K562 (cell line): ENCODE measurements at regions of chr5 and their contacts with region 1.

Region 1: GRCh38 chr5:175489693-175490443 is 11.5 kb downstream of the SFXN1 start:
- DNase-seq: no peak
- ATAC-seq: peak; percentile 26; the same call in 1 of the 3 replicates
- H3K4me3 ChIP-seq: no peak overlapping the region
- H3K27ac ChIP-seq: no peak overlapping the region
- H3K4me1 ChIP-seq: peaks cover 0 to 4% of the 10 kb centered on the region in 2 experiments; a peak in 2 of 5 replicates
- H3K27me3 ChIP-seq: no peaks in the 10 kb centered on the region
- CTCF ChIP-seq: no peak
- EP300 ChIP-seq: no peak
- POLR2A ChIP-seq: no peak
- RAD21 ChIP-seq: no peak

Region 2: DNA sequence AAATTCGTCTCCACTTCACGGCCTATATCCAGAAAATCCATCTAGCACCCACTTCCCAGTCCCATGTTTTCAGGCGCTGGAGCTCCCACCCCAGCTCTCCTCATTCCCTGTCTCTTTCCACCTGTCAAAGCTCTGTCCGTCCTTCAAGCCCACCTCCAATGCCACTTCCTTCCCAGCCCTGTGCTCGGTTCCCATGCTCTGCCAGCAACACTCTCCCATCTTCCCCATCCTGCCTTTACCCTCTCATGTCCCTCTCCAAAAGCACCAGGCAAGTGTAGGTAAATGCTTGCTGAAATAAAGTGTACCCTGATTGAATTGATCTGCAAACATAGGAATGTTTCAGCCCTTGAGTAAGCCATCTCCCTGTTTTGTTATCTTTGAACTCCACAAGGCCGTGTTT is 55.1 kb before region 1 on chr5:
- CTCF ChIA-PET with region 1: no interaction called
- POLR2A ChIA-PET with region 1: no interaction called
- in situ Hi-C with region 1: no loop called
- intact Hi-C with region 1: no loop called
- DNase-seq: no peak
- ATAC-seq: no peak
- H3K4me3 ChIP-seq: no peak overlapping the region
- H3K27ac ChIP-seq: no peak overlapping the region
- H3K4me1 ChIP-seq: no peaks in the 10 kb centered on the region
- H3K27me3 ChIP-seq: peaks cover 2 to 5% of the 10 kb centered on the region in 2 experiments; a peak in 4 of 5 replicates
- CTCF ChIP-seq: no peak
- EP300 ChIP-seq: no peak
- POLR2A ChIP-seq: no peak
- RAD21 ChIP-seq: no peak

Region 3: GRCh38 chr5:175478384-175479124 is 11.3 kb before region 1 on chr5 and contains the start of gene SFXN1:
- CTCF ChIA-PET with region 1: no interaction called
- POLR2A ChIA-PET with region 1: interaction called, 24 read pairs
- in situ Hi-C with region 1: no loop called
- intact Hi-C with region 1: no loop called
- DNase-seq: peak; percentile 88 to 97 (median 96)
- ATAC-seq: peak; percentile 89
- H3K4me3 ChIP-seq: peak within 1 kb of the TSS; percentile 88
- H3K27ac ChIP-seq: peak within 1 kb of the TSS; percentile 93
- H3K4me1 ChIP-seq: peaks cover 9 to 18% of the 10 kb centered on the region in 2 experiments; a peak in 4 of 5 replicates
- H3K27me3 ChIP-seq: peaks cover 24% of the 10 kb centered on the region in 2 experiments
- CTCF ChIP-seq: 0 out of 6 replicates have a peak, but pooled peaks of 1 of the 3 experiments have one; percentile 0
- EP300 ChIP-seq: no peak
- POLR2A ChIP-seq: peak; percentile 63; the same call in 1 of the 2 replicates
- RAD21 ChIP-seq: no peak
- polyA plus RNA-seq, gene SFXN1: 31.8 to 34.0 TPM